ENCODE measurements at regions of chr1 and their contacts with region 1.

Region 1: DNA sequence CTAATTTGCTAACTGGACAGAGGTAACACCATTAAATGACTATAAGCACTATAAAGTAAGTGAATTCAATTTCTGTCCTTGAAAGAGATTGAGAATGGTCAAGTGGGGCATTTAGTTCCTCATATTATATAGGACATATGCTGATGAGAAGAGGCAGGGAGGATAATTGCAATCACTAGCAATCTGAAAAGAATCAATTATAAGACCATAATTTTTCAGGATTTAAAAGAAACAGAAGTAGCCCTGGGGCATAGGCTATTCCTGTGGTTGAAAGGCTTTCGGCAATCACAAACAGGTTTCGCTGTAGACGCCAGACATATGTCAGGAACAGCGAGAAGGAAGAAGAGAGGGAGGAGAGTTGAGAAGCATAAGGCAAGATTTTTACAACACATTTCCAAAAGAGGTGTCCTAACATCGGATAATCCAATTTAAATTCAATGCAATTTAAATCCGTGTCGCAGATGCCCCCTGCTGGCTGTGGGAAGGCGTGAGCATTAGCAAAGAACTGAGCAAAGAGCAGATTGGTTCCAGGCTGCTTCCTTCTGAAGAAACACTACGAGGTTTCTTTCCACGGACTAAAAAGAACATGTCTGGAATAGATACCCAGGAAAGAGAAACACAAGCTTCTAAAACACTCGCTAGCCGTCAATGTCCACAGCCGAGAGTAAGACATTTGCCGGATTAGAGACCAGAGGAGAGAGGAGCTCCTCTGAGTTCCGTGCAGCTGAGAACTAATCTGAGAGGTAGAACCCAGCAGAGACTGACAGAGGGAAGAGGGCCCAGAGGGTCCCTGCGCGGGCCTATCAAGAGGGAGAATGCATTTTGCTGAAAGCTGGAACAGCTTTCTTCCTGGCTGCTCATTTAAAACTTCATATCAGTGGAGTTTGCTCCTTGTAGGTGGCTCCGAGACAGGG is 27.9 kb downstream of the RGS5 start:
- DNase-seq: peak; percentile 76 to 79
- H3K4me3 ChIP-seq: peak overlapping the region; percentile 28 to 31
- H3K27ac ChIP-seq: peak overlapping the region; percentile 60 to 85
- H3K4me1 ChIP-seq: peaks cover 0 to 99% (median 24%) of the 10 kb centered on the region in 4 donors
- H3K27me3 ChIP-seq: no peaks in the 10 kb centered on the region
- CTCF ChIP-seq: peak; percentile 82 to 88

Region 2: DNA sequence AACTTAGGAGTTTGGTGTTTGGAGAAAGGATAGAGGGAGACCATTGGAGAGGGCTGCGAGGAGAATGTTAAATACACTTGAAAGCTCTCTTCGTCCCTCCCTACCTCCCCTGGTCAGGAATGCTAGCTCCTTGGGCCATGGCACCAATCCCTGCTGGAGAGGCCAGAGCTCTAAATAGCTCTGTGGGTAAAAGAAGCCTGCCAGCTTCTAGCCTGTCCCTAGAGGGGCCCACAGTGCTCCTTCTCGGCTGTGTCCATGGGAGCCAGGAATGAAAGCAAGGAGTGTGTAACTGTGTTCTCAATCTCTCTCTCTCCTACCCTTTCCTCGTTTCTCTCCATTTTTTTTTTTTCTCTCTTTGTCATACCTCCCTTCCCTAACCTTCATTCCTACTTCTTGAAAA is 313.7 kb before region 1 on chr1 and contains the start of gene CCDC190:
- intact Hi-C with region 1: loop called (anchors 5 kb)
- DNase-seq: peak; percentile 63 to 91
- H3K4me3 ChIP-seq: peak within 1 kb of the TSS in 1 of 2 donors; percentile 27
- H3K27ac ChIP-seq: peak within 1 kb of the TSS; percentile 86 to 88
- H3K4me1 ChIP-seq: peaks cover 0 to 70% (median 26%) of the 10 kb centered on the region in 4 donors
- H3K27me3 ChIP-seq: no peaks in the 10 kb centered on the region
- CTCF ChIP-seq: no peak

Region 3: GRCh38 chr1:162878000-162878596 is 296.7 kb before region 1 on chr1:
- intact Hi-C with region 1: loop called (anchors 5 kb)
- DNase-seq: peak; percentile 45 to 76
- H3K4me3 ChIP-seq: no peak overlapping the region
- H3K27ac ChIP-seq: no peak overlapping the region
- H3K4me1 ChIP-seq: peaks cover 0 to 17% (median under 1%) of the 10 kb centered on the region in 4 donors
- H3K27me3 ChIP-seq: no peaks in the 10 kb centered on the region
- CTCF ChIP-seq: peak; percentile 75 to 89

Region 4: DNA sequence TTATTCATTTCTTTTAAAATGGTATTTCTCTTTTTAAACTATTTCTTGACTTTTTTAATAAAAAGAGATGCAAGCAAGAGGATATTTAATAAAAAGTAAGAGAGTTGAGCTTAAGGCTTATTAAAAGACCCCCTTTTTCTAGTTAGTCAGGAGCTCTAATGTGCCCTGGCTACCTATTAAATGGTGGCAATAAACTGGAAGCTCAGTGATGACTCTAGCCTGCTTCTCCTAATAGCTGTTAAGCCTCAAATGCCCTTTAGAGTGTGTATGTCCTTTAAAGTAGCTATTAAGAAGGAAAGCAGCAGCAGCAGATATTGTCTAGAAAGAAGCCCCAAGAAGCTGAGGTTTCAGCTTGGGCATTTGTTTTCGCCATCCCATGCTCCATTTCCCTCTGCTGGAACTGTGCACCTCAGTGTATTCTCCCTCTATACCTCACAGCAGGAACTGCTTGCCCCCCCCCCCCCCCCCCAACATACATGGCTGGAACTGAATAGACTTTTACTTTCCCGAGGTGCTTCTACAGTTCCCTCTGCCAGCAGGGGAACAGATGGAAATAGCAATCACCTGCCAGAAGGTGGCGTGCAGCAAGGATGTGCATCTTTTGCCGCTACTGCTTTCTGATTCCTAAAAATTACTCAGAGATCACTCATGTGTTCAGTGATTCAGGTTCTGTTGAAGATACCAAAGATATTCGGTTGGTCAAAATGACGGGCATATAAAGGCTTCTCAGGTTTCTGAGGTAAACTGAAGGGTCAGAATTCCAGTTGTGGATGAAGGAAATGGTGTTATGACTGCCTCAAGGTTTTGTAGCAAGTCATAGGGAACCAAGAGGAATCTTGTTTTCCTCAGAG is 103.2 kb before region 1 on chr1:
- intact Hi-C with region 1: loop called (anchors 5 kb)
- DNase-seq: peak; percentile 58 to 82
- H3K4me3 ChIP-seq: peak overlapping the region; percentile 12
- H3K27ac ChIP-seq: peak overlapping the region; percentile 20 to 56
- H3K4me1 ChIP-seq: peaks cover 0 to 37% (median 4%) of the 10 kb centered on the region in 4 donors
- H3K27me3 ChIP-seq: no peaks in the 10 kb centered on the region
- CTCF ChIP-seq: peak; percentile 62 to 64

Region 5: DNA sequence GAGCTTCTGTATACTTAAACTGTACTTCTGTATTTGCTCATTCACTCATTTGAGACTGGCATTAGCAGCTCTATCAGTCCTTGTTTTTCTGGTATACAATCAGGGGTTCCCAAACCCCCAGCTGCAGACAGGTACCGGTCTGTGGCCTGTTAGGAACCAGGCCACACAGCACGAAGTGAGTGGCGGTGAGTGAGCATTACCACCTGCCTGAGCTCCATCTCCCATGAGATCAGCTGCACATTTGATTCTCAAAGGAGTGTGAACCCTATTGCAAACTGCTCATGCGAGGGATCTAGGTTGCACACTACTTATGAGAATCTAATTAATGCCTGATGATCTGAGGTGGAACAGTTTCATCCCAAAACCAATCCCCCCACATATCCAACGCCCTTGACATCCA is 128.8 kb after region 1 on chr1:
- intact Hi-C with region 1: no loop called
- DNase-seq: no peak
- H3K4me3 ChIP-seq: no peak overlapping the region
- H3K27ac ChIP-seq: no peak overlapping the region
- H3K4me1 ChIP-seq: peaks cover 0 to 16% (median 6%) of the 10 kb centered on the region in 4 donors
- H3K27me3 ChIP-seq: no peaks in the 10 kb centered on the region
- CTCF ChIP-seq: no peak

Region 6: GRCh38 chr1:163315773-163316374 is 141.1 kb after region 1 on chr1:
- intact Hi-C with region 1: loop called (anchors 5 kb)
- DNase-seq: peak in 1 of 2 donors; percentile 22
- H3K4me3 ChIP-seq: no peak overlapping the region
- H3K27ac ChIP-seq: no peak overlapping the region
- H3K4me1 ChIP-seq: peaks cover 0 to 18% (median 2%) of the 10 kb centered on the region in 4 donors
- H3K27me3 ChIP-seq: no peaks in the 10 kb centered on the region
- CTCF ChIP-seq: peak; percentile 71 to 85

Region 7: GRCh38 chr1:163351912-163352311 is 177.1 kb after region 1 on chr1:
- intact Hi-C with region 1: no loop called
- DNase-seq: no peak
- H3K4me3 ChIP-seq: no peak overlapping the region
- H3K27ac ChIP-seq: no peak overlapping the region
- H3K4me1 ChIP-seq: no peaks in the 10 kb centered on the region
- H3K27me3 ChIP-seq: no peaks in the 10 kb centered on the region
- CTCF ChIP-seq: no peak

Measured in tibial artery (tissue), 4 donors.